ENCODE measurements at regions of chr14 and their contacts with region 1.

Region 1: GRCh38 chr14:52325126-52325525 is 11.0 kb downstream of the PTGER2 start:
- DNase-seq: no peak
- ATAC-seq: peak; percentile 96
- H3K4me3 Mint-ChIP-seq: peak overlapping the region; percentile 33
- H3K27ac Mint-ChIP-seq: peak overlapping the region; percentile 32
- H3K4me1 Mint-ChIP-seq: peaks cover 28% of the 10 kb centered on the region
- H3K27me3 Mint-ChIP-seq: peaks cover 16% of the 10 kb centered on the region
- CTCF ChIP-seq: no peak

Region 2: GRCh38 chr14:52279405-52279804 is 45.7 kb before region 1 on chr14:
- CTCF ChIA-PET with region 1: no interaction called
- POLR2A ChIA-PET with region 1: no interaction called
- intact Hi-C with region 1: no loop called
- DNase-seq: no peak
- ATAC-seq: no peak
- H3K4me3 Mint-ChIP-seq: no peak overlapping the region
- H3K27ac Mint-ChIP-seq: no peak overlapping the region
- H3K4me1 Mint-ChIP-seq: no peaks in the 10 kb centered on the region
- H3K27me3 Mint-ChIP-seq: peaks cover 17% of the 10 kb centered on the region
- CTCF ChIP-seq: no peak

Region 3: DNA sequence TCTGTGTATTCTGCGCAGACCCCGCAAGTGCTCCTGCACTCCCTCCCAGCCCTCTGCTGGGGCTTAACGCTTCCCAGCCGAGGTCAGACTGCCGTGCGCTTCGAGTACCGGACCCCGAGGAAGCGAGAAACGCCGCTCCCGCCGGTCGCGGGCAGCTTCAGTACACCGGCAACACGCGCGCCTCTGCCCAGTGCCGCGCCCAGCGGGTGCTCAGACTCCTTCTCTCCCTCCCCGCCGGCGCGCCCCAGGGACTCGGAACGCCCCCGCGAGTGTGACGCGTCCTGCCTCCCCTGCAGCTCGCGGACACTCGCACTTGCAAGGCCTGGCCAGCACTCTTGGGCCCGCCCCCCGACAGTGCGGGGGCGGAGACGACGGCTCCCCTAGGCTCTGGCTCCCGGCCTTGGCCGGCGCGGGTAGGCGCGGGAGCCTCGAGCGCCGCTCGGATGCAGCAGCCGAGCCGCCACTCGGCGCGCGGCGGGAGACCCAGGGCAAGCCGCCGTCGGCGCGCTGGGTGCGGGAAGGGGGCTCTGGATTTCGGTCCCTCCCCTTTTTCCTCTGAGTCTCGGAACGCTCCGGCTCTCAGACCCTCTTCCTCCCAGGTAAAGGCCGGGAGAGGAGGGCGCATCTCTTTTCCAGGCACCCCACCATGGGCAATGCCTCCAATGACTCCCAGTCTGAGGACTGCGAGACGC is 11.1 kb before region 1 on chr14 and contains the start of gene PTGER2:
- CTCF ChIA-PET with region 1: no interaction called
- POLR2A ChIA-PET with region 1: interaction called, 11 read pairs
- intact Hi-C with region 1: loop called (anchors 1 kb)
- DNase-seq: peak; percentile 44
- ATAC-seq: peak; percentile 55
- H3K4me3 Mint-ChIP-seq: peak within 1 kb of the TSS; percentile 88
- H3K27ac Mint-ChIP-seq: peak within 1 kb of the TSS; percentile 4
- H3K4me1 Mint-ChIP-seq: peaks cover 50% of the 10 kb centered on the region
- H3K27me3 Mint-ChIP-seq: peaks cover 50% of the 10 kb centered on the region
- CTCF ChIP-seq: no peak
- total RNA-seq, gene PTGER2: 0.09 and 0.12 TPM in 2 replicates

Region 4: GRCh38 chr14:52351233-52352060 is 26.3 kb after region 1 on chr14:
- CTCF ChIA-PET with region 1: no interaction called
- POLR2A ChIA-PET with region 1: no interaction called
- intact Hi-C with region 1: loop called (anchors 2 kb)
- DNase-seq: no peak
- ATAC-seq: no peak
- H3K4me3 Mint-ChIP-seq: no peak overlapping the region
- H3K27ac Mint-ChIP-seq: no peak overlapping the region
- H3K4me1 Mint-ChIP-seq: no peaks in the 10 kb centered on the region
- H3K27me3 Mint-ChIP-seq: peaks cover 24% of the 10 kb centered on the region
- CTCF ChIP-seq: no peak

Region 5: DNA sequence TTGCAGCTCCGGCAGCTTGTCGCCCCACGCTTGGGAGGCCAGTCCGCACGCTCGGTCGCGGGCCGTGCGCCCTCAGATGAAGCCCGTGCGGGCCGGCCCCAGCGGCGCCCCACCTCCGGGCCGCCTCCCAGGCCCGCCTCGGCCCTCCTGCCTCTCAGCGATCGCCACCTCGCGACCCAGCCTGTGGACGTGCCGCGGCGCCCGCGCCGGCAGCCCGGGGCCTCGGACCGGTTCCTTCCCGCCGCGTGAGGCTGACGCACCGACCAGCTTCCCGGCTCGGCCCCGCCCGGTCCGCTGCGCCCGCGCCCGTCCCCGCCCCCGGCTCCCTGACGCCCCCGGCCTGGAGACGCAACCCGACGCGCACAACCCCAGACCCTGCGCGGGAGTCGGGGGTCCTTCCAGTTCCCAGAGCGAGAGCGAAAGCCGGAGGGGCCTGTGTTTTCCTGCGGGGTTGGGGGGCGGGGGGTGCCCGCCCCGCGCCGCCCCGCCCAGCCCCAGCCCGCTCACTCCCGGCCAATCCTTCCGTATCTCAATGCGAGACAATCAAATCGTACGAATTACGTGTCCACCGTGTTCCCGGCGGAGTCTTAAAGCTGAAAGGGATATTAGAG is 370.5 kb after region 1 on chr14 and contains the start of gene ERO1A:
- CTCF ChIA-PET with region 1: no interaction called
- POLR2A ChIA-PET with region 1: no interaction called
- intact Hi-C with region 1: loop called (anchors 5 kb)
- DNase-seq: peak; percentile 73
- ATAC-seq: peak; percentile 75
- H3K4me3 Mint-ChIP-seq: peak within 1 kb of the TSS; percentile 99
- H3K27ac Mint-ChIP-seq: peak within 1 kb of the TSS; percentile 94
- H3K4me1 Mint-ChIP-seq: peaks cover 30% of the 10 kb centered on the region
- H3K27me3 Mint-ChIP-seq: no peaks in the 10 kb centered on the region
- CTCF ChIP-seq: no peak
- total RNA-seq, gene ERO1A: 30.8 and 31.5 TPM in 2 replicates

Region 6: GRCh38 chr14:53613404-53614253 is 1288.5 kb after region 1 on chr14:
- CTCF ChIA-PET with region 1: no interaction called
- POLR2A ChIA-PET with region 1: no interaction called
- intact Hi-C with region 1: loop called (anchors 5 kb)
- DNase-seq: peak; percentile 59
- ATAC-seq: peak; percentile 93
- H3K4me3 Mint-ChIP-seq: peak overlapping the region; percentile 79
- H3K27ac Mint-ChIP-seq: peak overlapping the region; percentile 100
- H3K4me1 Mint-ChIP-seq: peaks cover 53% of the 10 kb centered on the region
- H3K27me3 Mint-ChIP-seq: no peaks in the 10 kb centered on the region
- CTCF ChIP-seq: no peak